ENCODE measurements at regions of chr10 and their contacts with region 1.

Region 1: GRCh38 chr10:70820976-70821755 is 5.4 kb downstream of the SGPL1 start:
- DNase-seq: no peak
- H3K4me3 Mint-ChIP-seq: peak overlapping the region; percentile 2
- H3K27ac Mint-ChIP-seq: peak overlapping the region; percentile 54
- H3K4me1 Mint-ChIP-seq: peaks cover 39% of the 10 kb centered on the region
- H3K27me3 Mint-ChIP-seq: no peaks in the 10 kb centered on the region

Region 2: DNA sequence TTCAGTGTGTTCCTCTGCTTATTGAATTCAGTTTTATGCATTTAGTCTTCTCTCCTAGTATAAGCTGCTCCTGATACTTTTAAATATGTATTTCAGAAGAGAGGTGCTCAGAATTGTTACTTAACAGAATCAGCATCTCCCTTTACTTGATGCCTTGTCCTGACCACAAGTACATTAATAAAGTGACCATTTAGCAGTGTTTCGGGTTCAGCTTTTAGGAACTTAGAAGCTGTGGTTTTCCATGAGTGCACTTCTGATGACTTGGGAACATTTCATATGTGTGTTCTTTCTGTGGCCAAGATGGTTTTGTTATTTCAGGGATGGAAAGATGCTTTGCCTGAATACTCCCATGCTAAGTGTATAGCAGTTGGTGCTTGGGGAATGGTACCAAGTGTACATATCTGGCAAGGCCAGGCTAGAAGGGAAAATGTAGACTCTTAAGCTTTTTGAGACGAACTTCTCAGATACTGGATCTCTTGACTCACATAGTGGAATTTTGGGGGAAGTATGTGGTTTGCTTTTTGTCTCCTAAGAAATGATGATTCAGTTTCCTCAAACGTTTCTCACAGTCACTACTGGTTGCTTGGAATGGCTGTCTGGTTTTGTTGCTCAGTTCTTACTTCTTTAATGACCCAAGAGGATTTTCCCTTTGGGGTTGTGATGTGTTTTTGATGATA is 11.8 kb after region 1 on chr10:
- intact Hi-C with region 1: loop called (anchors 1 kb)
- DNase-seq: no peak
- H3K4me3 Mint-ChIP-seq: peak overlapping the region; percentile 68
- H3K27ac Mint-ChIP-seq: peak overlapping the region; percentile 86
- H3K4me1 Mint-ChIP-seq: peaks cover 42% of the 10 kb centered on the region
- H3K27me3 Mint-ChIP-seq: no peaks in the 10 kb centered on the region

Measured in activated CD4-positive, alpha-beta T cell treated with anti-CD3 and anti-CD28 coated beads, Interleukin-2, amount 10 ng/mL, durations not matched to agents 24 days and 14 days (primary cell).